ENCODE measurements at regions of chr15 and their contacts with region 1.

Region 1: DNA sequence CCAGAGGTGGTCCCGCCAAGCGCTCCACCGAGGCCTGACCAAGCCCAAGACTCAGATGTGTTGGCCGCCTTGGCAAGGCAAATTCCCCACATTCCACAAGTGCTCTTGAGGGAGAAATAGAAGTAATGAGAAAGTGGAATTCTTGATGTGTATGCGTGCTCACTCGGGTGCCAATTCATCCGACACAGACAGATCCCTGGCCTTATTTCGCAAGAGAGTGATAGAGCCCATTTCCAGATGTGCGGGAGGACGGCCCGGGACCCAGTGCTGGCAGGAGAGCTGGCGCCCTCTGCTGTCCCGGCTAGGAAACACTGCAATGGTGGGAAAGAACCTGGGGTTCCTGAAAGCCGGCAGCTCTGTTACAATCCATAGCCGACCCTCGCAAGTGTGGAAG is 76.0 kb downstream of the HMG20A start:
- DNase-seq: peak; percentile 94

Region 2: GRCh38 chr15:77118882-77119321 is 377.8 kb before region 1 on chr15:
- intact Hi-C with region 1: loop called (anchors 5 kb)
- DNase-seq: no peak

Region 3: GRCh38 chr15:77186594-77187011 is 310.1 kb before region 1 on chr15:
- intact Hi-C with region 1: loop called (anchors 2 kb)
- DNase-seq: no peak

Region 4: GRCh38 chr15:77352887-77353286 is 143.8 kb before region 1 on chr15:
- intact Hi-C with region 1: loop called (anchors 10 kb)
- DNase-seq: no peak

Region 5: DNA sequence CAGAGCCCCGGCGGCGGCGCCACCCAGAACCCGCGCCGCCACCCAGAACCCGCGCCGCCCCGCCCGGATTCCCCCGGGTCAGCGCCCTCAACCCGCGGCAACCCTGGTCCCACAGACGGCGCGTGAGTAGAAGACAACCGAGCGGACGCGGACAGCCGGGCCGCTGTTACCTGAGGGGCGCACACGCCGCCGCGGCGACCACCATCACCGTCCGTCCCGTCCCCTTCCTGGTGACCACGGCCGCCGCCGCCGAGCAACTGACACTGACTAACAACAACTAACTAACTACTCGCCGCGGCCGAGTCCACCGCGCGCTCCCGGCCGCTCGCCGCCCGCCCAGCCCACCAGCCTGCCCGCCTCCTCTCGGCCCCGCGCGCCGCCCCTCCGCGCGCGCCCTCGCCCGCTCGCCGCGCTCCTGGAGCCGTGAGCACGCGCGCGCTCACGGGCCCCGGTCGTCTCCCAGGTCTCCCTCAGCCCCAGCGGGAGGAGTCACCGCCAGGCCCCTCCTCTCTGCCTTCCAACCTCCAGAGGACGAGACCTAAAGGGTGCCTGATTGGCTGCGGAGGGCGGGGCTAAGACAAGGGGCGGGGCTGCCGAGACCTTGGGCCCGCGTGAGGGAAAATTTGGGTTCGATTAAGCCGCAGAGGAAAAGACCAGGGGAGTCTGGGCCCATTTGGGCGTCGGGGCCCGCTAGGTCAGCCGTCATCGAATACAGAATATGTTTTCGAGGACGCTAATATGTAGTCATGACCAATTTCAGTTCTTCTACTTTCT is 76.7 kb before region 1 on chr15 and contains the start of gene PEAK1:
- intact Hi-C with region 1: loop called (anchors 1 kb)
- DNase-seq: peak; percentile 99
- total RNA-seq, gene PEAK1: 132 TPM

Region 6: DNA sequence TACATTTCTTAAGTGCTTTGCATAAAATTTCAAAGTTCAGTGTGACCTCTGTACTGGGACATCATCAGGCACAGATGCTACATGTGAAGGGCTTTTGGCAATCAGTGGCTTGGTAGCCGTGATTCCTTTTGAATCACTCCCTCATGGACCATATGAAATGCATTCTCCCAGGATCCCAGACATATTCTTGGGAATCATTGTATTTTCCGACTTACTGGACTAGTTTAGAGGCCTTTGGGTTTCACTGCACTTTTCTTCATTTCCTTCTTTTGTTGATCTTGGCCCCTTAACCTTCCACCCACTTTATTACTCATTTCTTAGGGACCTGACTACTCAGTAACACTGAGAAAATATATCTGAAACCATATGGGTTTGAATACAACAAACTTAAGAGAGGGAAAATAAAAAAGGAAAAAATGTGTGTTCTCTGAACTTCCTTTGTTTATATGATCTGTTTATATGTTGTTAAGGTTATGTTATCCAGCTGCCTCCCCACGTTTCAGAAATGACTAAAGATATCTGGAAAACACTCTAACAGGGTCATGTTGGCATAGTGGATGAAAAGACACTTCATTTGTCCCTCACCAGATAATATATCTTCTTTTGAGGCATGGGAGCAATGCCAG is 40.9 kb before region 1 on chr15:
- intact Hi-C with region 1: loop called (anchors 5 kb)
- DNase-seq: no peak

Region 7: DNA sequence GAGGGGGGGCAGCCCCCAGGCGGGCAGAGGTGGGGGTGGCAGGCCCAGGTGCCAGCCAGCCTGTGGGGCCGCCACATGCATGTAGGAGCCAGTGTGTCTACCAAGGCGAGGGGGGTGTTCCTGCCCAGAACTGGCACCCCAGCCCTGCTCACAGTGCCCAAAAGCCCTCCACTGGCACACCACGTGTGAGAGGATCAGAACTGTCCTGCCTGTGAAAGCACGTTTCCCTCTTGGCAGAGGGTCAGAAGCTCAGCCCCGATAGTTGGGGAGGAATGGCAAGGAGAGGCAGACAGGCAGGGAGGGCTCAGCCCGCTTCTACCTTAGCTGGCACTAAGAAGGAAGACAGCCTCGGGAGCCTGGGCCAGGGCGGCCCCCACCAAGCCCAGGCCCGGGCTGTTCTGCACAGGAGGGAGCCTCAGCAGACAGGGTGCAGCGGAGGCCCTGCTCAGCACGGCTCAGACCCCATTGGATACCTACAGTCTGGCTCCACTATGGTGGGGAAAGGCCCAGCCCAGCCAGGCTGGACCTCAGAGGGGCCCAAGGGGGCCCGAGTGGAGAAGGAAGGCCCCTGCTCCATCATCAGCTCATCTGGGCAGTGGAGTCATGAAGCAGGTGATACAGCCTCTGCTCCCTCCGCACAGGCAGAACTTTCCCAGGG is 220.8 kb after region 1 on chr15:
- intact Hi-C with region 1: no loop called
- DNase-seq: no peak